ENCODE measurements at regions of chr19 and their contacts with region 1.

Region 1: DNA sequence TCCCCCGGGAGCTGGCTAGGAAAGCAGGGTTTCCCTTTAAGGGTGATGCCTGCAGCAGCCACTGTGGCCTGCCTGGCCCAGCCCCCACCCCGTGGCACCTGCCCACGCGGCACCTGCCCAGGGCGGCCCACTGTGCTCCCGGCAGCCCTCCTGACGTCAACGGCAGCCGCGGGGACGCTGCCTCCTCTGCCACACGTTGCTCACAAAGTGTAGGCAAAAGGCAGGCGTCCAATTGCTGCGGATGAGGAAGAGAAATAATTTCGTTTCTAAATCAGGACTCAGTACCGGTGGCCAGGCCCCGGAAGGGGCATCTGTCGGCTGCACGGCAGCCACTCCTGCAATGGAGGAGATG is 122.3 kb downstream of the URI1 start:
- DNase-seq: no peak
- H3K4me3 ChIP-seq: peak overlapping the region in 2 of 3 donors; percentile 13 to 33
- H3K27ac ChIP-seq: no peak overlapping the region
- H3K4me1 ChIP-seq: no peaks in the 10 kb centered on the region
- H3K27me3 ChIP-seq: peaks cover 0 to 31% of the 10 kb centered on the region in 2 donors
- CTCF ChIP-seq: no peak
- POLR2A ChIP-seq: no peak

Region 2: GRCh38 chr19:29576761-29577648 is 487.3 kb before region 1 on chr19:
- intact Hi-C with region 1: no loop called
- DNase-seq: peak in 1 of 2 donors; percentile 17
- H3K4me3 ChIP-seq: no peak overlapping the region
- H3K27ac ChIP-seq: no peak overlapping the region
- H3K4me1 ChIP-seq: no peaks in the 10 kb centered on the region
- H3K27me3 ChIP-seq: peaks cover 0 to 81% of the 10 kb centered on the region in 2 donors
- CTCF ChIP-seq: no peak
- POLR2A ChIP-seq: no peak

Region 3: GRCh38 chr19:30105727-30106126 is 41.4 kb after region 1 on chr19:
- intact Hi-C with region 1: no loop called
- DNase-seq: no peak
- H3K4me3 ChIP-seq: no peak overlapping the region
- H3K27ac ChIP-seq: no peak overlapping the region
- H3K4me1 ChIP-seq: no peaks in the 10 kb centered on the region
- H3K27me3 ChIP-seq: peaks cover 0 to 8% of the 10 kb centered on the region in 2 donors
- CTCF ChIP-seq: no peak
- POLR2A ChIP-seq: no peak

Region 4: DNA sequence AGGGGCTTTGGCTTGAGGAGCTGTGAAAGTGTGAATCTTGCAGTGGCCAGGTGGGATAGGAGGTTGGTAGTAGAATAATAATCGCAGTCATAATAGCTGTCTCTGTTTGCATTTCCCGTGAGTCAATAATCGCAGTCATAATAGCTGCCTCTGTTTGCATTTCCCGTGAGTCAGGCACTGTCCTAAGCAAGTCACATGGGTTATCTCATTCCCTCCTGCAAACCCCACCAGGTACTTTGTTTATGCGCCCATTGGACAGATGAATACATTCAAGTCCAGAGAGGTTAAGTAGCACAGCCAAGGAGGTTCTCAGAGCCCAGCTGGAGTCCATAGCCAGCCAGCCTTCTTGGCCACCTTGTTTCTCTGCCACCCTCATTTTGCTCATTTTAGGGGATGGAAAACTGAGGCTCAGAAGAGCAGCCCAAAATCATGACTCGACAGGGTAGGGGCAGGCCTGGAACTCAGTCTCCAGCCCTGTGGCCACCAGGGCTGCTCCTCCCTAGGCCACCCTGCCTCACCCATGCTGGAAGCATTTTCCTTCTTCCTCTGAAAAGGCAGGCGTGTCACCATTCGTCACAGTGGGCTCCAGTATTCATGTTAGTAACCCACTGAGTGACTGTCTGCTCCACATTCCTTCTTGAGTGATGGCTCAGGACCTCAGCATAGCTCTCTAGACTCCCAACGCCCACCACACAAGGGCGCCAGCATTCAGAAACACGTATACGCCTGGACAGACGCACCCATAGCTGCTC is 83.9 kb after region 1 on chr19:
- intact Hi-C with region 1: no loop called
- DNase-seq: no peak
- H3K4me3 ChIP-seq: no peak overlapping the region
- H3K27ac ChIP-seq: no peak overlapping the region
- H3K4me1 ChIP-seq: no peaks in the 10 kb centered on the region
- H3K27me3 ChIP-seq: no peaks in the 10 kb centered on the region
- CTCF ChIP-seq: no peak
- POLR2A ChIP-seq: no peak

Region 5: DNA sequence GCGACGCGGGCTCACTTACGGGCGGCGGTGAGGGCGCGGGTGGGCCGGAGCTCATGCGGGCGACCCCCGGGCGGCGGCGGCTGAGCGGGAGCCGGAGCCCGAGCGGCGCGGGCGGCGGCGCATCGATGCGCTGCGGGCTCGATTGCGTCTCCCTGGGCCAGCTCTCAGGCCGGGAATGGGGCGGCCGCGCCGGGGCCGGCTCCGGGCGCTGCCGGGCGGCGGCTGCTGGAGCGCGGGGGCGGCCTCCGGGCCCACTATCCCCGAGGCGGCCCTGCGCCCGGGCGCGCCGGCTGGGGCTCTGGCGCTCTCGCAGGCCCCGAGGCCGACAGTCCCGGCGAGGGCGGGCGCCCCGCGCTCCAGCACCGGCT is 1286.4 kb after region 1 on chr19:
- intact Hi-C with region 1: loop called (anchors 5 kb)
- DNase-seq: no peak
- H3K4me3 ChIP-seq: peak overlapping the region; percentile 88 to 97 (median 96)
- H3K27ac ChIP-seq: peak overlapping the region; percentile 85 to 93
- H3K4me1 ChIP-seq: peaks cover 0 to 5% of the 10 kb centered on the region in 2 donors
- H3K27me3 ChIP-seq: peaks cover 0 to 11% of the 10 kb centered on the region in 2 donors
- CTCF ChIP-seq: no peak
- POLR2A ChIP-seq: no peak

Measured in breast epithelium (tissue), 4 donors.